ENCODE measurements at regions of chr15 and their contacts with region 1.

Region 1: GRCh38 chr15:55221090-55222011 is 24.6 kb upstream of the RSL24D1 start:
- DNase-seq: peak in 1 of 3 donors; percentile 17
- ATAC-seq: peak; percentile 67 to 90
- H3K4me3 ChIP-seq: no peak overlapping the region
- H3K27ac ChIP-seq: no peak overlapping the region
- H3K4me1 ChIP-seq: no peaks in the 10 kb centered on the region
- H3K27me3 ChIP-seq: no peaks in the 10 kb centered on the region

Region 2: GRCh38 chr15:55290528-55291057 is 69.2 kb after region 1 on chr15:
- intact Hi-C with region 1: loop called (anchors 2 to 5 kb)
- DNase-seq: peak; percentile 83 to 93 (median 92)
- ATAC-seq: peak; percentile 90 to 94
- H3K4me3 ChIP-seq: peak overlapping the region; percentile 95
- H3K27ac ChIP-seq: no peak overlapping the region
- H3K4me1 ChIP-seq: no peaks in the 10 kb centered on the region
- H3K27me3 ChIP-seq: no peaks in the 10 kb centered on the region

Region 3: DNA sequence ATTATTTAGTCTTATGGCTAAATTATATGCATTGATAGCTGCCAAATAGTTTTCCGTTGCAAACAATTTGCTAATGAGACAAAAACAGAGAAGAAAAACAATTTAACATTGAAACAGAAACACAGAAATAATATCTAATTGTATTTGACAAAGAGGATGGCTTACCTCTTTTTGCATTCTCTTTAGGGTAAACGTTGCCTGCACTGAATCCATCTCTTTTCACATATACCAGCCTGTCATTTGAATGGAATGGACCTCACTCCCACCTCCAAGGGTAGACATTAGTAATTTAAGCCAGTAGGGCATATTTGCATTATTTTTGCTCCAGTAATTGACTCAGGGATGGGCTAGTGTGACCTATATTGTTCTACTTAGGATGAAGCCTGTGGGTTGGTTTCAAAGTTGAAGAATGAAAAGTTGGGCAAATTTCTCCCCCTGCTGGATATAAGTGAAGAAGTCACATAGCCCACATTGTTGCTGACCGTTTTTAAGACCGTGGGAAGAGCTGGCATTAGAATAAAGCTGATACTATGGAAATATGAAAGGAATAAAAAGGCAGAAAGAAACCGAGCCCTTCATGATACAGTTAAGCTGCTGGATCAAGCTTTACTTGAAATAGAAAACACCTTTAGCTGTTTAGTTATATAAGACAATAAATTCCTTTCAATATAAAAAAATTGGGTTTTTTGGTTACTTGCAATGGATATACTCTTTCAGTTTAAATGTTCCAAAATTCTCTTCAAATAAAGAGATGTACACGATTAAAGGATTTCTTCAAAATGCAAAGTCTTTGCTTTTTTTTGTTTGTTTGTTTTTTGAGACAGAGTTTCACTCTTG is 213.9 kb after region 1 on chr15:
- intact Hi-C with region 1: loop called in 2 of 4 experiments (anchors 5 to 10 kb)
- DNase-seq: no peak
- ATAC-seq: peak; percentile 43 to 53
- H3K4me3 ChIP-seq: no peak overlapping the region
- H3K27ac ChIP-seq: no peak overlapping the region
- H3K4me1 ChIP-seq: no peaks in the 10 kb centered on the region
- H3K27me3 ChIP-seq: no peaks in the 10 kb centered on the region

Region 4: DNA sequence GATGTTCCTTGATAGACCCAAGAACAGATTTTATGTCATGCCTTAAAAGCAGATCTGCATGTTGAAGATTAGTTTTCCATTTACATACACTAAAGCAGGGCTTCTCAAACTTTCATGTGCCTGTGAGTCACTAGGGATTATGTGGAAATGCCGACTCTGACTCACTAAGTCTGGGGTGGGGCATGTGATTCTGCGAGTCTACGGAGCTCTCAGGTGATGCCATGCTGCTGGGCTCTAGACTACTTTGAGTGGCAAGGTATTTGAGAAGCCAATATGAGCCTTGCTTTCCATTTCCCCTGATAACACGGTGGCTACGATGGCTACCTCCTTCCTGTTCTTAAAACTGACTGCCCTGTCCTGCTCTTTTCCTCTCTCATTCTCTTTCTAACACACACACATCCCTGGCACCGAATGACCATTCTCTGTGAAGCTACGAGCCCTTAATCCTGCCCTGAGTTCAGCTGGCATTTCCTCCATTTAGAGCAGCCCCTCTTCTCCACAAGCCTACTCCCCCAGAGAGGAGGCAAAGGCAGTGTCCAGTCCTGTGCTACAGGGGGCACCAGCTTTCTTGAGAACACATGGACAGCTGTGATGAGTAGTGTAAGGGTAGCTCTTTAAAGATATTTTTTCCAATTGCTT is 406.5 kb after region 1 on chr15:
- intact Hi-C with region 1: no loop called
- DNase-seq: no peak
- ATAC-seq: no peak
- H3K4me3 ChIP-seq: no peak overlapping the region
- H3K27ac ChIP-seq: no peak overlapping the region
- H3K4me1 ChIP-seq: peaks cover 2% of the 10 kb centered on the region
- H3K27me3 ChIP-seq: no peaks in the 10 kb centered on the region